Vagina (tissue), 2 donors: ENCODE measurements at regions of chr22 and their contacts with region 1.

Region 1: GRCh38 chr22:36286471-36287224 is 33.7 kb downstream of the APOL1 start:
- DNase-seq: no peak
- H3K4me3 ChIP-seq: no peak overlapping the region
- H3K27ac ChIP-seq: peak overlapping the region; percentile 73
- H3K4me1 ChIP-seq: no peaks in the 10 kb centered on the region
- H3K27me3 ChIP-seq: no peaks in the 10 kb centered on the region
- CTCF ChIP-seq: peak; percentile 76 to 85 (median 79)
- POLR2A ChIP-seq: no peak

Region 2: DNA sequence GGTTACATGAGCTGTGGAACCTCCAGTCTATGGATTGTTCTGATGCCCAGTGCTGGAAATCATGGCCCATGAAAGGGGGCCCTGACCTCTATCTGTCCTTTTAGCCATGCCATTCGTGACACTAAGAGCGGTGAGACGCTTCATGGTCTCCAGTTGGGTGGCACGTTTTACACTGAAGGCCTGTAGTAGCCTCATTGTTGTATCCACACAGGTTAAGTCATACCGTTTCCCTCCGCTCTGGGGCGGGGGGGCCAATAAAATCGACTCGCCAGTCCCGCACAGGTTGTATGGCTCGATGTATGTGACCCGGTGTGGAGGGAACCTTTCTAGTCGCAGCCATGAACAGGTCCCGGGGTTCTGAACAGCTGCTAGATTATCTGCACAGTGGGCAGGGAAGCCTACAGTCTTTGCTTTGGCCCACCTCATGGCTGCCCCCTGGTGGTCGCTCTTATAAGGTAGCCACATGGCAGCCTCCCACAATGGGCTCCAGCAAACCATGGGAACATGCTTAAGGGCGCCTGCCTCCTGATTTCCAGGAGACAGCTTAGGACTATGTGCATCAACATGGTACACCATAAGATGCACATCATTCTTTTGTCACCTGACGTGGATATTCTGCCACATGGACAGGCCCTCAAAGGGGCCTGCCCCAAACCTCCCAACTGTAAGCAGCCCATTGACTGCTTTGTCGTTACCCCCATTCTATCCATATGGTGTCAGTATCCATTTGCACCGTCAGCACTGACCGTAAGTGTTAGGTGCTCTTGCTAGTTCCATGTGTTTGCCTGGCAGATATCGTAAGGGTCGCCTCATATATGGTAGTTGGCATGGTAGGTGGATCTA is 106.4 kb before region 1 on chr22:
- intact Hi-C with region 1: no loop called
- DNase-seq: no peak
- H3K4me3 ChIP-seq: no peak overlapping the region
- H3K27ac ChIP-seq: no peak overlapping the region
- H3K4me1 ChIP-seq: no peaks in the 10 kb centered on the region
- H3K27me3 ChIP-seq: no peaks in the 10 kb centered on the region
- CTCF ChIP-seq: peak; percentile 66 to 94 (median 75)
- POLR2A ChIP-seq: no peak

Region 3: GRCh38 chr22:36194971-36195370 is 91.7 kb before region 1 on chr22:
- intact Hi-C with region 1: loop called (anchors 10 kb)
- DNase-seq: peak in 1 of 2 donors; percentile 89
- H3K4me3 ChIP-seq: no peak overlapping the region
- H3K27ac ChIP-seq: no peak overlapping the region
- H3K4me1 ChIP-seq: peaks cover 8% of the 10 kb centered on the region
- H3K27me3 ChIP-seq: no peaks in the 10 kb centered on the region
- CTCF ChIP-seq: peak; percentile 48 to 74 (median 62)
- POLR2A ChIP-seq: no peak

Region 4: DNA sequence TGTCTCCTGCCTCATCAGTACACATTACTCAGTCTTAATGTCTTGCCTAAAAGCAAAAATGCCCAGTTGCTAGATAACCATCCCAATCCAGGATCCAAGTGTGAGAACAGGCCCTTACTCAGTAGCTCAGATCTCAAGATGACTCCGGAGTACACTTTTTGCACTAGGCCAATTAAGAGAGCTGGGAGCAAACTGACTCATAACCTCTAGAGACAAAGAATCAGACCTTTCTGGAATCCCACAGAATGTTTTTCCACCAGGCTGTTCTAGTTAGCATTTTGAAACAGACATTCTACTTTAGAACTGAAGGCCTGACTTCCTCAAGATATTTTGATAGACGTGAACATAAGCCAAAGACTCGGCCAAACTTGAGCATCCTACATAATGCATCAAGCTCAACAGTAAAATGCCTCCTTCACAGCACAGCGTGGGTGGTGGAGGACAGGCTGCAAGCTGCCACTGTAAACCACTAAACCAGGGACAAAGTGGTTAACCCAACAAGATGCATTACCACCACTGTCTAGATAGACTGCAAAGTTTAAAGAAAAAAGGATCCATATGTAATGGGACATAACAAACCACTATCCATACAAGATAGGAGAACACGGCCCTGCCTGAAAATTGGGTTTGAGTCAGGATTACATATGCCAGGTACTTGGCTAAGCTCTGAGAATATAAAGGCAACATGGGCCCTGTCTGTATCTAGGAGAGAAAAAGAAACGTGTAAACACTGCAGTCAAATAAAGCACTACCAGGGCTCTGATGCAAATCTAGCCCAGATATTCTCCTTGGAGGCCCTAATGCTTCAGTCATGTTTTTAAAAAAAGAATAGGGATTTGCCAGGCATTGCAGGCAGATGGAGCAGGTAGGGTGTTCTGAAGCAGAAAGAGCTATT is 52.8 kb after region 1 on chr22:
- intact Hi-C with region 1: no loop called
- DNase-seq: no peak
- H3K4me3 ChIP-seq: no peak overlapping the region
- H3K27ac ChIP-seq: peak overlapping the region; percentile 97
- H3K4me1 ChIP-seq: peaks cover 84% of the 10 kb centered on the region
- H3K27me3 ChIP-seq: no peaks in the 10 kb centered on the region
- CTCF ChIP-seq: no peak
- POLR2A ChIP-seq: no peak